ENCODE measurements at regions of chr15 and their contacts with region 1.

Region 1: DNA sequence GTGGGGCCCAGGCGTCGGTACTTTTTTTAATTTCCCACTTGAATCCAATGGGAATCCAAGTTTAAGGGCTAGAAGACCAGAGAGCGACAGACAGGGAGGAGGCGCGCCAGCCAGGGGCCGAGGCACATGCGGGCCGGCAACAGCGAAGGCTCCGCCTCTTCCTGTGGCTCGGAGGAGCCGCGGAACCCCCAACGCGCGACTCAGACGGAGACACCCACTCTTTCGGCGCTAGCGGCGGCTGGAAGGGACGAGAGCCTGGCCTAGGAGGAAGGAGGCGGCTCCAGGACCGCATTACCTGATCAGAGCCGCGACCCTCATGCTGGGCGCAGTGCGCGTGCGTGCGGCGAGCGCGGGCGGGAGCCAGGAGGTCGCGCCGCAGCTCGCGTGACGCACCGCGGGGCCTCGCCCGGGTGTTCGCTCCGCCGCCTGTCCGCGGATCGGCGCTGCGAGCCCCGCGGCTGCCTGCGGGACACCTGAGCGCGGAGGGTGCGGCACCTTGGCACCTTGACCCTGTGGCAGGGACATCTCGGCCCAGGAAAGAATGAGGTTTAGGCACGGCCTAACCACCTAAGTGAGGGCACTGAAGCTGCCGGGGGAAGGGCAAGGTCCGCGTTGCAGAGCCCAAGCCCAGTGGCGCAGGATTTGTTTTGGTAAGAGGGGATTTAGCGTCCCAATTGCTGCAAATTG is at the start of gene DPH6:
- DNase-seq: peak; percentile 89 to 93
- ATAC-seq: peak; percentile 96
- H3K4me3 ChIP-seq: peak within 1 kb of the TSS; percentile 40 to 90
- H3K27ac ChIP-seq: peak within 1 kb of the TSS; percentile 69 to 96
- H3K4me1 ChIP-seq: no peaks in the 10 kb centered on the region
- H3K27me3 ChIP-seq: no peaks in the 10 kb centered on the region
- total RNA-seq, gene DPH6: 19.7 to 21.0 TPM

Region 2: GRCh38 chr15:35603301-35603700 is 57.3 kb after region 1 on chr15:
- intact Hi-C with region 1: loop called in 1 of 2 experiments (anchors 5 kb)
- DNase-seq: no peak
- ATAC-seq: no peak
- H3K4me3 ChIP-seq: no peak overlapping the region
- H3K27ac ChIP-seq: no peak overlapping the region
- H3K4me1 ChIP-seq: peaks cover 0 to 2% of the 10 kb centered on the region in 2 donors
- H3K27me3 ChIP-seq: no peaks in the 10 kb centered on the region

Region 3: DNA sequence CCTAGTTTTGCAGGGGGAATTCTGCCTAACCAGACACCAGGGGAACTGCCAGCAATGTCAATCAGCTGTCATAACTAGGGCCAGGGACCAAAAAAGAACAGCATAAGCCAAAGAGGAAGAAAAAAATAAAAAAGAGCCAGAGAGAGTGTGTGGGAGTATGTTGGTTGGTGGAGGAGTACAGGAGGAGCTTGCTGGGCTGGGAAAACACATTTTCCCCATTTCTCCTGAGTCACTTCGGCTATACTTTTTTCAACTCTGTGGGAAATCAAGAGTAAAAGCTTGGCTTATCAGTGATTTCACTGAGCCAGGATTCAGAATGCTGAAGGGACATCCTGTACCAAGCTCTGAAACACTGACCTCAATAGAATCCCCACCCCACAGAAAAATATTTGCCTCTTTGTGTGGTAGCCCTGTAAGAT is 144.7 kb after region 1 on chr15:
- intact Hi-C with region 1: loop called (anchors 5 to 10 kb)
- DNase-seq: no peak
- ATAC-seq: peak; percentile 95
- H3K4me3 ChIP-seq: peak overlapping the region in 1 of 2 donors; percentile 26
- H3K27ac ChIP-seq: peak overlapping the region; percentile 93 to 95
- H3K4me1 ChIP-seq: no peaks in the 10 kb centered on the region
- H3K27me3 ChIP-seq: no peaks in the 10 kb centered on the region

Region 4: DNA sequence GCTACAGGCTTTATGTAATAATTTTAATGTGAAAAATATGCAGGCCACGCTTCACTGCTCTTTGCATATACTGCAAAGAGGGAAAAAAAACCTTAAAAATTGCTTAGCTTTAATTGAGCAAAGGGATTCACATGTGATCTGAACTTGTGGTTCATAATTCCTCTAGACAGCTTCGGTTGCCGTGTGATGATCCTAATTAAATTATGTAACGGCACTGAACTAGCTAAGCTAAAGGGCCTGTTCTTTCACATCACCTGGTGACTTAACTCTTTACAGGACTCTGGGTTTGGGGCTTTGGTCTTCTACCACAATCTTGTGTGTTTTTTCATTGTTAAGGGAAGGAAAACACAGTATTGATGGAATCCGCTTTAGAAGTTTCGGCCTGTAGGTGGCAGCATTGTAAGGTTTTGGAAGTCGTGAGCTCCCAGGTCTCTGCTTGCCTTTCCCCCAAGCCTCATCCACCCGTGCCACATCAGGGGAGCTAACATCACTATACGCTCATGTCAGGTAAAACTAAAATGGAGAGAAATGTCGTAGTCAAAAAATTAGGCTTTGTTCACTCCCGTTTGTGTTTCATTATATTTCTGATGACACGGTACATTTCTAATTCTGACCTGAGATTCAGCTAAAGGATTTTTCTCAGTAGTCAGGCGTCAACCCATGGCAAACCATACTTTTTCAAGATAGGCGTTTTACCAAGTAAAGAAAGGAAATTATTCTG is 205.6 kb after region 1 on chr15:
- intact Hi-C with region 1: loop called in 1 of 2 experiments (anchors 10 kb)
- DNase-seq: peak; percentile 72 to 79
- ATAC-seq: peak; percentile 85
- H3K4me3 ChIP-seq: no peak overlapping the region
- H3K27ac ChIP-seq: no peak overlapping the region
- H3K4me1 ChIP-seq: peaks cover 2 to 3% of the 10 kb centered on the region in 2 donors
- H3K27me3 ChIP-seq: no peaks in the 10 kb centered on the region